ENCODE measurements at regions of chr3 and their contacts with region 1.

Region 1: DNA sequence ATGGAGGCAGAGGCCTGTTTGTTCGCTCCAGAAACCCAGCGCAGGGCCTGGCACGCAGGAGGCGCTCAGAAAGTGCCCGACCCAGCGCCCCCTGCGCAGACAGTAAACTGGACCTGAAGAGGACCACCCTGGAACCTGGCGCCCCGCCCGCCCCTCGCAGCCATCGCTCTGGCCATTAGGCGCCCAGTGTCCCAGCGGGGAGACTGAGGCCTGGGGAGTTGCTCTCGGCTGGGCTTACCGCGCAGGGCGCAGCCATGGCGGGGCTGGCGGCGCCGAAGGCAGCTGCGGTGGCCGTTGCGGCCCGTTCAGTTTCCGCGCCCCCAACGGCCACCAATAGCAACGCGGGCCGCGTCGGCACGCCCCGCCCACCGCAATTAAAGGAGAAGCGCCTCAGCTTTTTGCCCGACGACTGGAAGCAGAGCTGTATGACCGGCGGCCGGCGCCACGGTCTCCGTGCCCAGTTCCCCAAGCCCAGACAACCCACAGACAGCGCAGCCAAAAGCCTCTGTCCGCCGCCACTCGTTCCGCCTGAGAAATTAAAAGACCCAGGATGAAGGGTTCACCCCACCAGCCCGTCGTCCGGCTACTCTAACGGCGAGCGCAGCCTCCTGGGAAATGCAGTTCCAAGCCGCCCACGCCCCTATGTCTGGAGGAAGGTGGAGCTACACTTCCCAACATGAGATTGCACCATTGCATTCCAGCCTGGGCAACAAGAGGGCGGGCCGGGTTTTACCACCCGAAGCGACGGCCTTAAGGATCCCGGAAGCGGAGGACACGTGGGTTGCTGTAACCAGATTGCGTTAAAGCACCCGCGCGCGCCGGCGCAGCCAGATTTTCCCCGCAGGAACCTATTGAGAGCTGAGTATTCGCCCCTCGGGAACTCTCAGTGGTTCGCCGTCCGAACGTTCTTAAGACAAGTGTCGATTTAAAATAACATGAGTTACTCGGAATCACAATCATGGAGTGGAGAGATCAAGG is at the start of gene POC1A:
- DNase-seq: peak; percentile 66 to 94 (median 78)
- ATAC-seq: peak; percentile 87
- H3K4me3 ChIP-seq: peak within 1 kb of the TSS; percentile 87
- H3K4me3 Mint-ChIP-seq: peak within 1 kb of the TSS; percentile 99
- H3K27ac ChIP-seq: peak within 1 kb of the TSS; percentile 73 to 74
- H3K27ac Mint-ChIP-seq: peak within 1 kb of the TSS; percentile 96
- H3K4me1 ChIP-seq: peaks cover 17% of the 10 kb centered on the region
- H3K4me1 Mint-ChIP-seq: peaks cover 12% of the 10 kb centered on the region
- H3K27me3 ChIP-seq: no peaks in the 10 kb centered on the region
- H3K27me3 Mint-ChIP-seq: no peaks in the 10 kb centered on the region
- CTCF ChIP-seq: peak; percentile 9
- total RNA-seq, gene POC1A: 0.22 to 0.39 TPM

Region 2: GRCh38 chr3:52197842-52198668 is 43.6 kb after region 1 on chr3 and contains the start of gene ALAS1:
- CTCF ChIA-PET with region 1: no interaction called
- POLR2A ChIA-PET with region 1: interaction called, 9 read pairs
- intact Hi-C with region 1: loop called in 1 of 2 experiments (anchors 2 kb)
- DNase-seq: peak; percentile 87 to 97 (median 94)
- ATAC-seq: peak; percentile 98
- H3K4me3 ChIP-seq: peak within 1 kb of the TSS; percentile 90
- H3K4me3 Mint-ChIP-seq: peak within 1 kb of the TSS; percentile 98
- H3K27ac ChIP-seq: peak within 1 kb of the TSS; percentile 70 to 73
- H3K27ac Mint-ChIP-seq: peak within 1 kb of the TSS; percentile 92
- H3K4me1 ChIP-seq: peaks cover 50% of the 10 kb centered on the region
- H3K4me1 Mint-ChIP-seq: peaks cover 51% of the 10 kb centered on the region
- H3K27me3 ChIP-seq: no peaks in the 10 kb centered on the region
- H3K27me3 Mint-ChIP-seq: no peaks in the 10 kb centered on the region
- CTCF ChIP-seq: no peak
- total RNA-seq, gene ALAS1: 6.0 to 7.0 TPM

Region 3: DNA sequence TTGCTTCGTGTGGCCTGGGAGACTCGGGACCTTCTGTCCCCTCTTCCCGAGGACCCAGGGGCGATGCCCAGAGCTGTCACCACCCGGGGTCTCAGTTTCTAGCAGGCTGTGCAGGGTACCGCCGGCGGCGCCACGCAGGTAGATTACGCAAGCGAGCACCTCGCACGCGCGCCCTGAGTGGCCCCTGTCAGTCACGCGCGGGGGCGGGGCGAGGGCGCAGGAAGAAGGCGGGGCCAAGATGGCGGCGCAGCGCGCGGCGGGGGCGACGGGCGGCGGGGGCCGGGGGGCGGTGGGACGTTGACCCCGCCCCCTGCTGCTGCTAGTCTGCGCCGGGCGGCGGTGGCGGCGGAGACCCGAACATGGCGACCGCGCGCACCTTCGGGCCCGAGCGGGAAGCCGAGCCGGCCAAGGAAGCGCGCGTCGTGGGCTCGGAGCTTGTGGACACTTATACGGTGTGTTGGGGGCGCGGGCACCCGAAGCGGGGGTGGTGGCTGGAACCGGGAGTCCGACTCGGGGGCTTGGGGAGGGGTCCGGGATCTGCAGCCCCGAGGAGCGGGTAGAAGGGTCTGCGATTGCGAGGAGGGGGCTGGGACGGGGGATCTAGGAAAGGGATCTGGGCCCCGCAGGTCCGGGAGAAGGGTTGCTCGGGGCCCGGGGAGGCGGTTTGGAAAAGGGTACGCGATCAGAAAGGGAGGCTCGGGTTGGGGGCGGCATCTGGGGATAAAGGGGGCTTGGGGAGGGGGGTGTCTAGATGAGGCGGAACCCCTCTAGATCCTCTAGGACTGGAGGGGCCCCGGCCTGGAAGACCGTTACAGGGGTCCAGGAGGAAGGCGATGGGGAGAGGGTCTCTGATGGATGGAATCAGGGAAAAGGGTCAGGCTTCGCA is 301.1 kb after region 1 on chr3 and contains the start of gene NISCH:
- CTCF ChIA-PET with region 1: no interaction called
- POLR2A ChIA-PET with region 1: no interaction called
- intact Hi-C with region 1: loop called in 1 of 2 experiments (anchors 5 kb)
- DNase-seq: peak; percentile 91 to 99 (median 97)
- ATAC-seq: peak; percentile 95
- H3K4me3 ChIP-seq: peak within 1 kb of the TSS; percentile 97
- H3K4me3 Mint-ChIP-seq: peak within 1 kb of the TSS; percentile 96
- H3K27ac ChIP-seq: peak within 1 kb of the TSS; percentile 81 to 85
- H3K27ac Mint-ChIP-seq: peak within 1 kb of the TSS; percentile 100
- H3K4me1 ChIP-seq: peaks cover 44% of the 10 kb centered on the region
- H3K4me1 Mint-ChIP-seq: peaks cover 43% of the 10 kb centered on the region
- H3K27me3 ChIP-seq: no peaks in the 10 kb centered on the region
- H3K27me3 Mint-ChIP-seq: no peaks in the 10 kb centered on the region
- CTCF ChIP-seq: no peak
- total RNA-seq, gene NISCH: 160 to 163 TPM

Measured in CD4-positive, alpha-beta T cell (primary cell).